CD4-positive, alpha-beta memory T cell (primary cell): ENCODE measurements at regions of chr1 and their contacts with region 1.

Region 1: DNA sequence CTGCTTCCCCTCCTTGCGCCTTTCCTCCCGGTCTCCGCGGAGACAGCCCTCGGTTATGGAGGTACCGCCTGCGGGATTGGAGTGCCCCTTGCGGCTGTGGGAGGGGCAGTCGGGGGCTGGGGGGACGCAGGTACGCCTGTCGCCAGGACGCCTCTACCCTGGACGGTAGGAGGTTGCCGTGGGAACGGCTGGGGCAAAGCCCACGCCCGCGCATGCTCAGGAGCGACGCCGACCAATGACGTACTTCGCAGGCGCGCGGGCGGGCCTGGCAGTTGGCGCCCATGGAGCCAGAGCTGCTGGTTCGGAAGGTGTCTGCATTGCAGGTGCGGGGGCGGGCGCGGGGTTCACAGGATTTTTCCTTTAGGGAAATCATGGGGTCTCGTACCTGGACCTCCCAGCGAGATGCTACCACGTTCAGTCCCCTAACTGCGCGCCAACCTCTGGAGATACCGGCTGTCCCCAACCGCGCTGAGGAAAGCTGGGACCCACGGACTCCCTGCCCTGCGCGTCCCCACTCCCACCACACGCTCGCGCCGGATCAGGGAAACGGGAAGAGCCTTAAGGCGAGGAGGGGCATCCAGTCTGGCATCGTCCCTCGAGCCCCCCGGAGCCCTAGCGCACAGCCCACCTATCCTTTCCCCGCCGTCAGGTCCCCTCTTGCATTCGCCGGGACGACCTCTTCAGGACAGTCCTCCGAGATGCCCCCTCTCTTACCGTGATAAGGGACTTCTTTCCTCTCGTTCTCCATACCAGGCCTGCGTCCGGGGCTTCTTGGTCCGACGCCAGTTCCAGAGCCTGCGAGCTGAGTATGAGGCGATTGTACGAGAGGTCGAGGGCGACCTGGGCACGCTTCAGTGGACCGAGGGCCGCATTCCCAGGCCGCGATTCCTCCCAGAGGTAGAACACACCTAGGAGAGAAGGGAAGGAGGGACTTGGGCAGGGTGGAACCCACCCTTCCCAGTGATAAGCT is at the start of gene IQCC:
- DNase-seq: peak; percentile 84 to 86 (median 86)
- H3K4me3 ChIP-seq: peak within 1 kb of the TSS; percentile 71 to 73
- H3K4me3 Mint-ChIP-seq: peak within 1 kb of the TSS; percentile 86 to 91 (median 89)
- H3K27ac ChIP-seq: peak within 1 kb of the TSS; percentile 63
- H3K27ac Mint-ChIP-seq: peak within 1 kb of the TSS; percentile 83 to 95 (median 92)
- H3K4me1 ChIP-seq: peaks cover 39% of the 10 kb centered on the region
- H3K4me1 Mint-ChIP-seq: peaks cover 15 to 48% (median 33%) of the 10 kb centered on the region in 4 donors
- H3K27me3 ChIP-seq: no peaks in the 10 kb centered on the region
- H3K27me3 Mint-ChIP-seq: no peaks in the 10 kb centered on the region
- total RNA-seq, gene IQCC: 2.7 TPM

Region 2: GRCh38 chr1:31762726-31763670 is 442.7 kb before region 1 on chr1:
- CTCF ChIA-PET with region 1: no interaction called
- POLR2A ChIA-PET with region 1: no interaction called
- intact Hi-C with region 1: loop called (anchors 10 kb)
- DNase-seq: peak; percentile 65 to 71 (median 65)
- H3K4me3 ChIP-seq: peak overlapping the region; percentile 51 to 61
- H3K4me3 Mint-ChIP-seq: peak overlapping the region; percentile 55 to 88 (median 82)
- H3K27ac ChIP-seq: no peak overlapping the region
- H3K27ac Mint-ChIP-seq: peak overlapping the region in 3 of 7 donors; percentile 32 to 67 (median 48)
- H3K4me1 ChIP-seq: peaks cover 35% of the 10 kb centered on the region
- H3K4me1 Mint-ChIP-seq: peaks cover 11 to 39% (median 17%) of the 10 kb centered on the region in 4 donors
- H3K27me3 ChIP-seq: peaks cover 10% of the 10 kb centered on the region
- H3K27me3 Mint-ChIP-seq: peaks cover 0 to 2% of the 10 kb centered on the region in 2 donors

Region 3: DNA sequence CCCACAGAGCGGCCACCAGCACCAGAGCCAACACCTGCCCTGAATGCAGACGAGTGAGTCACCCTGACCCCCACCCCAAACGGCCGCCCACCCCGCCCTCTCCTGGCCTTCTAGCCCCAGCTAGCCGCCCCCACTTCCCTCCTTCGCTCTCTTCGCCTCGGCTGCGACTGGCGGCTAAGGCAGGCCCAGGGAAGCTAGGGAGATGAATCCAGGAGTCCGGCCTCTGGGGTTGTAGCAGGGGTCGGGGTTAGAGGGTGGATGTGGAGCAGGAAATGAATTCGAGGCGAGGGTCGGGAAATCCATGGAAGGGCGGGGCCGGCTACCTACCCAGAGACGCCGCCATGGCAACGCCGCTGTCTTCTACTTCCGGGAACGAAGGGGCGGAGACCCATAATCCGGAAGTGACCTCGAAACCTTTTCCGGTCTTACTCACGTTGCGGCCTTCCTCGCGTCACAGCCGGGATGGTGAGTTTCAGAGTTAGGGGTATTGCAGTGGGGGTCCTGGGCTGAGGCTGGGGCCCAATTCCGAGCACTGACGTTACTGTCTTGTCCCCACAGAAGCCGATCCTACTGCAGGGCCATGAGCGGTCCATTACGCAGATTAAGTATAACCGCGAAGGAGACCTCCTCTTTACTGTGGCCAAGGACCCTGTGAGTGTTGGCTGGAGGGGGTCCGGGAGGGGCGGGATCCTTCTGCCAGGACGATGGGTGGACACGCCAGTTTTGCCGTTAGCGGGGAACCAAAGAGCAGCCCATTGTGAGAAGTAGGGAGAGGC is 16.5 kb after region 1 on chr1 and contains the starts of genes EIF3I and TMEM234:
- CTCF ChIA-PET with region 1: interaction called, 31 read pairs
- POLR2A ChIA-PET with region 1: interaction called, 29 read pairs
- intact Hi-C with region 1: loop called (anchors 1 kb)
- DNase-seq: peak; percentile 89 to 96 (median 91)
- H3K4me3 ChIP-seq: peak within 1 kb of the TSS; percentile 96 to 97
- H3K4me3 Mint-ChIP-seq: peak within 1 kb of the TSS; percentile 95 to 99 (median 97)
- H3K27ac ChIP-seq: peak within 1 kb of the TSS; percentile 99
- H3K27ac Mint-ChIP-seq: peak within 1 kb of the TSS; percentile 99 to 100 (median 99)
- H3K4me1 ChIP-seq: peaks cover 30% of the 10 kb centered on the region
- H3K4me1 Mint-ChIP-seq: peaks cover 23 to 59% (median 38%) of the 10 kb centered on the region in 4 donors
- H3K27me3 ChIP-seq: no peaks in the 10 kb centered on the region
- H3K27me3 Mint-ChIP-seq: no peaks in the 10 kb centered on the region
- total RNA-seq, gene EIF3I: 78.3 to 85.3 TPM
- total RNA-seq, gene TMEM234: 27.1 to 30.7 TPM